Ovary (tissue), 10 donors: ENCODE measurements at regions of chr17 and their contacts with region 1.

Region 1: DNA sequence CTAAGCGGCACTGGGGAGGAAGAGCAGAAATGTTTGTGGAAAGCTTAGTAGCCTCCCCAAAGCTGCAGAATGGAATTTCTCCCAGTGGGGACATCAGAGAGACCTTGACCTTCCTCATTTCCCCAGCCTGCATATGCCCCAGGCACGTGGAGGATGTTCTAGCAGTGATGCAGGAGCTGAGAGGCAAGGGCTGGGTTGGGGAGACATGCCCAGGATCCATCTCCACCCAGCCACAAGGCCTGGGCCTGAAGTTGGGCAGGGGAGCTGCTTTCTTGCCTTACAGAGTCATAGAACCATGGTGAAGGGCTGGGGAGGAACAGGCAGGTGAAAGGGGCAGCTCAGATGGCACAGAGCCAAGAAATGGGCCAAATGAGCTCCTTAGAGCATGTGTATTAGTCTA is 104.0 kb downstream of the TMEM132E start:
- DNase-seq: no peak
- H3K4me3 ChIP-seq: no peak overlapping the region
- H3K27ac ChIP-seq: no peak overlapping the region
- H3K4me1 ChIP-seq: no peaks in the 10 kb centered on the region
- H3K27me3 ChIP-seq: no peaks in the 10 kb centered on the region
- CTCF ChIP-seq: no peak
- EP300 ChIP-seq: no peak
- POLR2A ChIP-seq: no peak

Region 2: DNA sequence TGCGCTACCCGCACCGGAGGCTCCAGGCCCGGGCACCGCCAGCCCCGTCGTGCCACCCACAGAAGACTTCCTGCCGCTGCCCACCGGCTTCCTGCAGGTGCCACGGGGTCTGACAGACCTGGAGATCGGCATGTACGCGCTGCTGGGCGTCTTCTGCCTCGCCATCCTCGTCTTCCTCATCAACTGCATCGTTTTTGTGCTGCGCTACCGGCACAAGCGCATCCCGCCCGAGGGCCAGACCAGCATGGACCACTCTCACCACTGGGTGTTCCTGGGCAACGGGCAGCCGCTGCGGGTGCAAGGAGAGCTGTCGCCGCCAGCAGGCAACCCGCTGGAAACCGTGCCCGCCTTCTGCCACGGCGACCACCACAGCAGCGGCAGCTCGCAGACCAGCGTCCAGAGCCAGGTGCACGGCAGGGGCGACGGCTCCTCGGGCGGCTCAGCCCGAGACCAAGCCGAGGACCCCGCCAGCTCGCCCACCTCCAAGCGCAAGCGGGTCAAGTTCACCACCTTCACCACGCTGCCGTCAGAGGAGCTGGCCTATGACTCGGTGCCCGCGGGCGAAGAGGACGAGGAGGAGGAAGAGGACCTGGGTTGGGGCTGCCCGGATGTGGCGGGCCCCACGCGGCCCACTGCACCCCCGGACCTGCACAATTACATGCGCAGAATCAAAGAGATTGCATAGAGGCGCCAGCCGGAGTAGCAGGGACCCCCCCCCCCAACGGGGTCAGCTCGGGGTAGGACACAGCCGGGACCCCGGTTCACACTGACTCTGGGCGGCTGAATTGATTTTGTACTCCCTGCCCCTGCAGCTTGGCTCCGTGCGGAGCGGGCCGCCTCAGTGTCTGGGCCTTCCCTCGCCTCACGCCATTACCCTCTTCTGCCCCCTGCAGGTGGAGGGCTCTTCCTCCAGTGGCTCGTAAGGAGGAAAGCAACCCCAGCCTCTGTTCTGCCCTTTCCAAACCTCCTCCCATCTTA is 45.6 kb before region 1 on chr17:
- intact Hi-C with region 1: loop called in 1 of 4 experiments (anchors 5 kb)
- DNase-seq: peak; percentile 42 to 81 (median 74)
- H3K4me3 ChIP-seq: peak overlapping the region; percentile 1
- H3K27ac ChIP-seq: no peak overlapping the region
- H3K4me1 ChIP-seq: no peaks in the 10 kb centered on the region
- H3K27me3 ChIP-seq: no peaks in the 10 kb centered on the region
- CTCF ChIP-seq: peak; percentile 37 to 73 (median 62)
- EP300 ChIP-seq: no peak
- POLR2A ChIP-seq: no peak

Region 3: DNA sequence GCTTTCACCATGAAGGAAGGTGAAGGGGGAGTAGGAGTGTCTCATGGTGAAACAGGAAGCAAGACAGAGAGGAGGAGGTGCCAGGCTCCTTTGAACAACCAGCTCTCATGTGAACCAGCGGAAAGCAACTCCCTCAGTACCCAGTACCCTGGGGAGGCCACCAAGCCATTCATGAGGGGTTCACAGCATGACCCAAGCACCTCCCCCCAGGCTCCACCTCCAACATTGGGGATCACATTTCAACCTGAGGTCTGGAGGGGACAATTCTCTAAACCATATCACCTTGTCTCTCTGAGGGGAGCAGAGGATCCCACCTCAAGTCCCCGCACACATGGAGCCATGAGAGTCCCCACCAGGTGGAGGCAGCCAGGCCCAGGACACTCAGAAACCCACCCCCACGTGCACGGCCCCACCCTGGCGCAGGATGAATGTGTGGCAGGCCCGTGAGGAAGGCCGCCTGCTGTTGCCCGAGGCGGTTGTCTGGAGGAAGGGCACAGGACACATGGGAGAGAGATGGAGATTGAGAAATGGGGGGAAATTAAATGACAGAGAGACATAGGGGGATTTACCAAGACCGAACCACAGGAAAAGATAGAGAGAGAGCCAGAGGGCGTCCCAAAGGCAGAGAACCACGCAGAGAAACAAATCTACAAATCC is 18.1 kb before region 1 on chr17:
- intact Hi-C with region 1: no loop called
- DNase-seq: no peak
- H3K4me3 ChIP-seq: no peak overlapping the region
- H3K27ac ChIP-seq: no peak overlapping the region
- H3K4me1 ChIP-seq: no peaks in the 10 kb centered on the region
- H3K27me3 ChIP-seq: no peaks in the 10 kb centered on the region
- CTCF ChIP-seq: no peak
- EP300 ChIP-seq: no peak
- POLR2A ChIP-seq: no peak

Region 4: GRCh38 chr17:34740565-34741520 is 57.5 kb after region 1 on chr17:
- intact Hi-C with region 1: loop called in 1 of 4 experiments (anchors 10 kb)
- DNase-seq: no peak
- H3K4me3 ChIP-seq: no peak overlapping the region
- H3K27ac ChIP-seq: no peak overlapping the region
- H3K4me1 ChIP-seq: no peaks in the 10 kb centered on the region
- H3K27me3 ChIP-seq: no peaks in the 10 kb centered on the region
- CTCF ChIP-seq: no peak
- EP300 ChIP-seq: no peak
- POLR2A ChIP-seq: no peak